ENCODE measurements at regions of chr9 and their contacts with region 1.

Region 1: DNA sequence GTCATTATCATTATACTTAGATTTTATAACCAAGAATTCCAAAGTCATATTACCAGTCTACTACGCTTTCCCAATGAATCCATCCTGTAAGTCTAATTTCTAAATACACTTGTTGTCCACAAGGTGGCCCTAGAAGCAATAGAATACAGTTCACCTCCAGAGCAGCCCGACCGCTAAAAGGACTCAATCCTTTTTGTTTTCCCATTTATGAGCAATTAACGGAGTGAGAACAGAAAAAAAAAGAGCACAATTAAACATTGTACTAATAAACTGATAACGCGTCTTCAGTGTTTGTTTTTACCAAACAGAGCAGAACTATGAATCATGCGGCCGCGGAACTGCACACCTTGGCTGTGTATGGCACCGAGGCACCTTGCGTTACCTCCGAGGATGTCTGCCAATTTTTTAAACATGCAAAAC is 160.7 kb upstream of the DAPK1 start:
- DNase-seq: peak; percentile 50 to 70 (median 65)
- H3K4me3 ChIP-seq: peak overlapping the region in 1 of 3 experiments; percentile 21
- H3K4me3 Mint-ChIP-seq: peak overlapping the region; percentile 54 to 91
- H3K27ac ChIP-seq: no peak overlapping the region
- H3K27ac Mint-ChIP-seq: no peak overlapping the region
- H3K4me1 ChIP-seq: peaks cover 6 to 7% of the 10 kb centered on the region in 2 donors
- H3K4me1 Mint-ChIP-seq: peaks cover 12% of the 10 kb centered on the region
- H3K27me3 ChIP-seq: peaks cover 18 to 21% of the 10 kb centered on the region in 2 donors
- H3K27me3 Mint-ChIP-seq: peaks cover 19 to 30% (median 30%) of the 10 kb centered on the region in 3 donors
- CTCF ChIP-seq: peak; percentile 86

Region 2: GRCh38 chr9:87662808-87663528 is 326.0 kb after region 1 on chr9:
- intact Hi-C with region 1: loop called (anchors 2 to 5 kb)
- DNase-seq: peak; percentile 44 to 62 (median 55)
- H3K4me3 ChIP-seq: no peak overlapping the region
- H3K4me3 Mint-ChIP-seq: no peak overlapping the region
- H3K27ac ChIP-seq: no peak overlapping the region
- H3K27ac Mint-ChIP-seq: peak overlapping the region in 2 of 7 donors; percentile 18 to 43
- H3K4me1 ChIP-seq: no peaks in the 10 kb centered on the region
- H3K4me1 Mint-ChIP-seq: peaks cover 3% of the 10 kb centered on the region
- H3K27me3 ChIP-seq: no peaks in the 10 kb centered on the region
- H3K27me3 Mint-ChIP-seq: peaks cover 0 to 3% (median 2%) of the 10 kb centered on the region in 3 donors
- CTCF ChIP-seq: peak; percentile 80